ENCODE measurements at regions of chr1 and their contacts with region 1.

Region 1: DNA sequence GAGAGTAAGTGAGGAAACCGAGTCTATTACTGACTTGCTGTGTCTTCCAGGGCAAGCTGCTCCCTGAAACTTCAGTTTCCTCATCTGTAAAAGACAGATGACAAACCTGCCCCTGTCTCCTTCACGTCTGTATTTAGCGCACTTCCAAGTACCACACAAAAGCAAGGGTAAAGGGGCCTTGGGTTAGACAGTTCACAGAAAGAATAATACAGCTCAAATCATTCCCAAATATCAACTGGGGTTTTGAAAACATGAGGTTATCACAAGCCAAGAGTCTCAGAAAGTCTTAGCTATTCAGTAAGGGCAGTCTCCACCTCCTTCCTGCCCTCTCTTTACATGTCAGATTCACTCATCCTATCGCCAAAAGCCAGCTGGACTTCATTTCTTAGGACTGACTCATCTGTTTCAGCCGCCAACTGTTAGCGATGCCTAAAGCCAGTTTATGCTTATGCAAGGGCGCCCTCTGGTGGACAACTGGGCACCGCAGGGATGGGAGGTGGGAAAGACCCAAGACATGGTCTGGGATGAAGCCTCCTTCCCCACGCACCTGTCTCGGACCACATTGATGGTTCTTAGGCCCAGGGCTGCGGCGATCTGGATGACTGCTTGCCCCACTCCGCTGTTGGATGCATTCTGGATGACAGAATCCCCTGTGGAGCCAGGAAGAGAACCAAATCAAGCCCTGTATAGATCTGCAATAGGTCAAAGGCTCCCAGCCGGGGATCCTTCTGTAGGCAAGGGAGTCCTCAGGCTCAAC is 21.1 kb upstream of the SRSF4 start:
- DNase-seq: peak; percentile 95
- ATAC-seq: peak; percentile 97
- H3K4me3 ChIP-seq: no peak overlapping the region
- H3K27ac ChIP-seq: peak overlapping the region; percentile 85
- H3K4me1 ChIP-seq: peaks cover 15% of the 10 kb centered on the region
- H3K27me3 ChIP-seq: no peaks in the 10 kb centered on the region
- CTCF ChIP-seq: peak; percentile 99

Region 2: DNA sequence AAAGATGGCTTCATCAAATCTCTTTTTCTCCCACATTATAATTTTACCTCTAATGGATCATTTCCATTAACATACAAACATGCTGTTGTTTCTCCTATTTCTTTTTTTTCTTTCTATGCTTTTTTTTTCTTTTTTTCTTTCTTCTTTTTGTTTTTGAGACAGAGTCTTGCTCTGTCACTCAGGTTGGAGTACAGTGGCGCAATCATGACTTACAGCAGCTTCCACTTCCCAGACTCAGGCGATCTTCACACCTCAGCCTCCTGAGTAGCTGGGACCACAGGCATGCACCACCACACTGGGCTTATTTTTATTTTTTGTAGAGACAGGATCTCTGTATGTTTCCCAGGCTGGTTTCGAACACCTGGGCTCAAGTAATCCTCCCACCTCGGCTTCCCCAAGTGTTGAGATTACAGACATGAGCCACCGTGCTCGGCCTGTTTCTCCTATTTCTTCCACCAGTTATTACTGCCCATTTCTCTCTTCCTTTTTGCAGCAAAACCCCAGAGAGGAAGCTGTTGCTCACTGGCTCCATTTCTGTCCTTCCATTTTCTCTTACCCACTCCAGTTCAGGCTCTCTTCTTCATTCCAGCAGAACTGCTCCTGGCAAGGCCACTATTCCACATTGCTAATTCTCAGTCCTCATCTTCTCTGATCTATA is 422.9 kb before region 1 on chr1:
- intact Hi-C with region 1: loop called (anchors 10 kb)
- DNase-seq: peak; percentile 22
- ATAC-seq: no peak
- H3K4me3 ChIP-seq: no peak overlapping the region
- H3K27ac ChIP-seq: no peak overlapping the region
- H3K4me1 ChIP-seq: peaks cover 7% of the 10 kb centered on the region
- H3K27me3 ChIP-seq: no peaks in the 10 kb centered on the region
- CTCF ChIP-seq: no peak

Region 3: GRCh38 chr1:29245876-29246275 is 43.1 kb after region 1 on chr1:
- intact Hi-C with region 1: no loop called
- DNase-seq: no peak
- ATAC-seq: peak; percentile 57
- H3K4me3 ChIP-seq: no peak overlapping the region
- H3K27ac ChIP-seq: no peak overlapping the region
- H3K4me1 ChIP-seq: no peaks in the 10 kb centered on the region
- H3K27me3 ChIP-seq: no peaks in the 10 kb centered on the region
- CTCF ChIP-seq: peak; percentile 29